Right ventricle myocardium superior (tissue), 1 donor: ENCODE measurements at regions of chr3 and their contacts with region 1.

Region 1: DNA sequence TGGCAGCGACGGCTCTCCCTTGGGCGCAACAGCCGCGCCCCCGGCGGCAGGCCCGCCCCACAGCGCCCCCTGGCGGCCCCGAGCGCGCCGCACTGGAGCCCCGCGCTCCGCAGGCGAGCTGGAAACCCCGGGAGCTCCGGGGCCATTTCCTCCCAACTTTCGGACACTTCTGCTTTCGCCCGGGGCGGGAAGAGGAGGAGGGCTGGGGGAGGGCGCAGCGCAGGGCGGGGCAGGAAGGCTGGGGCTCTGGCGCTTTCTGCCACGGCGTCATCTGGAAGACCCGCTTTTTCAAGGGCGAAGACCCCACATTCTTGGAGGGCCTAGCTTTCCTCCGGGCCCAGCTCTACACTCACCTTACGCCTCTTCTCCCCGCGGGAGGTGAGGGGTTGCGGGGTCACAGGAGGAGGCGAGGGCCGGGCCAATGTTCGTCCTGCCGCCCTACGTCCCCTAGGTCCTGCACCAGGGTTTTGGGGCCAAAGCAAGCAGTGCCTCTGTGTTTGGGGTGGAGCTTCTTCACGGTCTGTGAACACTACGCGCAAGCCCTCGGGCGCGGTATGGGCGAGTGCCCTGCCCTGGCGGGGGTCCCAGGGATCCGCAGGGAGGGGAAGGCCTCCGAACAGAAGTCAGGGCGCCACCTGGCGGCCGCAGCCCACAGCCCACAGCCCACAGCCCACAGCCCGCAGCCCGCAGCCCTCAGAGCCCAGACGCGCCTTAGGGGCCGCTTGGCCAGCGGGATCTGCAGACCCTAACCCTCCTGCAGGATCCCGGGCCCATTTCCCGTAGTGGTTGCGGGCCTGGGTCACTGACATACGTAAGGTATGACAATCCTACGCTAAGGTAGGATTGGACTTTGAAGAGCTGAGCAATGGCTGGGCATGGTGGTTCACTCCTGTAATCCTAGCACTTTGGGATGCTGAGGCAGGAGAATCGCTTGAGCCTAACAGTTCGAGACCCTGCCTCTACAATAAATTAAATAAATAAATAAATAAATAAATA is 31.1 kb downstream of the FOXL2 start:
- DNase-seq: peak; percentile 97
- ATAC-seq: peak; percentile 97

Region 2: GRCh38 chr3:138594150-138594934 is 321.5 kb before region 1 on chr3 and contains the start of gene CEP70:
- intact Hi-C with region 1: loop called (anchors 2 kb)
- DNase-seq: peak; percentile 96
- ATAC-seq: peak; percentile 99
- total RNA-seq, gene CEP70: 19.0 TPM

Region 3: DNA sequence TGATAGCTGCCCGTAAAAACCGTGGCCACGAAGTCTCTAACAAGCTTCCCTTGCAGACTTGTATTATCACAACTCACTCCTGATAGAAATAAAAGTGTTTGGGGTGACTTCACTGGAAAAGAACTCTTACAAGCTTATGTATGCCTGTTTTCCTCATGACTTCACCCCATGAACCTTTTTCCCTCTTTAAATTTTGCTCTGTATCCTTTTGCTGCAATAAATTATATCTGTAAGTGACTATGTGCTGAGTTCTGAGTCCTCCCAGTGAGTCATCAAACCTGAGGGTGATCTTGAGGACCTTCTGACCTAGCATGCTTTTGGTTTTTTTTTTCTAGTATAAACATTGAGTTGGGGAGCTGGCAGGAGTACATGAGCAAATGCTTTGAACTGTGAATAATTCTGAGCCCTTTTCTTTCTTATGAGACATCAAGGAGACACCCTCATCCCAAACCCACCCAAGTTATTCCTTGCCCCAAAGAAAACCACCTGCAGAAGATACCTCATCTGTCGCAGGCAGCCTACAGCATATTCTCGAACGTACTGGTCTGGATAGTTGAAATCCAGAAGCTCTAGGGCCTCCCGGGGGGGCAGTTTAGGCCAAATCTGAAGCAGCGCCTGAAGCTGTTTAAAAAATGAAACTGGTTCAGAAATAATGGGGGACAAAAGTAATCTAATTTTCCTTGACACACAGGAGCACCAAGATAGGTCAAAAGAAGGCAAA is 221.4 kb before region 1 on chr3:
- intact Hi-C with region 1: loop called (anchors 5 kb)
- DNase-seq: no peak
- ATAC-seq: no peak

Region 4: DNA sequence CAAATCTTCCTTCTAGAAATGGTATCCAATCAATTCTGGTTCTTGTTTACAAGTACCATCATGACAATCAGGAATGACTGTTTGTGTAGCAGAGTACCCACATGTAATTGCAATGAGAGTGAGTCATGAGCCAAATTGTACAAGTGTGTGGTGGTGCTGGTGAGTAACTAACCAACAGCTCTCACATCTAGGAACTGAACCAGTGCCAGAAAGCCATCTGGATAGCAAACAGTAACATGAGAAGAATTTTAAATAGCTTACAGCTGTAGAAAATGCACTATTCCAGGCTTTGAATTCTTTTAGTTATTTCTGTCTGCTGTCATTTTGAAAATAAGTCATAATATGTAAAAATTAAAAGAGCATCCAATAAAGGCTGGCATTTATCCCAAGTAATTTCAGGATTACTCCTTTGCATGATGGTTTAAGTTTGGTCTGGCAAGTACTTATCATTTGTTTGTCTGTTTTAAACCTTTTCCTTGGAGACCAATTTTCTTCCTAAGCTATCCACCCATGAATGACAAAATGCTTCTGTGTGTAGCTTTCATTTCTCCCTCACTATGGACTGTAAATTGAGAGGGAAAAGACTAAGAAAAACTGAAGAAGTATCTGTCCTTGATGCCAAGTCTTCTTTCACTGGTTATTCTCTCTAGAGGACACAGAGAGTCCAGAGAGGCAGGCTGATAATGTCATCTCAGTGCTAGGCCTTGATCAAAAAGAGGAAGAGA is 141.1 kb before region 1 on chr3:
- intact Hi-C with region 1: no loop called
- DNase-seq: no peak
- ATAC-seq: peak; percentile 91

Region 5: GRCh38 chr3:138834359-138835212 is 81.2 kb before region 1 on chr3 and contains the start of gene PIK3CB:
- intact Hi-C with region 1: loop called (anchors 5 kb)
- DNase-seq: peak; percentile 96
- ATAC-seq: peak; percentile 99
- total RNA-seq, gene PIK3CB: 30.7 TPM